Activated T-helper 2 cell treated with anti-CD3 and anti-CD28 coated beads, Interferon-gamma antibody, Interleukin-2, Interleukin-4, amounts not matched to agents 10 μg/mL and 5 μg/mL and 100 μg/mL, durations not matched to agents 14 hours and 24 hours and 36 hours (primary cell): ENCODE measurements at regions of chrX and their contacts with region 1.

Region 1: DNA sequence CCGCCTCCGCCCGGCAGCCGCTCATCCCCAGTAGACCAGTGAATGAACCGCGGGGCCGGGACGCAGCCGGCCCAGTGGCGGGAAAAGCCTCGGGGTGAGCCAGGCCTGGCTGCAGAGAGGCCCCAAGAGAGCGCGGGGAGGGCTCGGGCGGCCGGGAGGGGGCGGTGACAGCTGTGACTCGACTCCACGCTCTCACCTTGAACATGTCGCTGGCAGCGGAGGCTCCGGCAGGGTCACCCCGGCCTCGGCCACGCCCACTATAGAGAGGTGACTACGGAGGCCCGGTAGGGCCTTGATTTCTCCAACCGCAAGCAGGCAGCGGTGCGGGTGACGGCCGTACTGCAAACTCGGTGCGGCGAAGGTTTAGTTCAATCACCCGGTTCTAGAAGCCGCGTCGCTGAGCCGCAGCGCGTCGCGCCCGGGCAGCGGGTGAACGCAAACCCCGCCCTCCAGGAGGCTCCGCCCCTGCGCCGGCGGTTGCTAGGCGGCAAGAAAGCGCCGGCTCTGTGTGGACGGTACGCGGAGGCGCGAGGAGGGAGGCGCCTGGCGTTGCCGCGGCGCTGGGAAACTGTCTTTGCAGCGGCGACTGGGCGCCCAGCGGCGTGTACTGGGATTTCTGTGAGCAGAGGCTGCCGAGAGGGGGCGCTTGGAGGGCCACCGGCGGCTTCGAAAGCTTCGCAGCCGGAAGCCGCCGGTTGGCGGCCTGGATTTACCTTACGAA is at the starts of genes APOO and CXorf58:
- DNase-seq: peak; percentile 90
- H3K4me3 Mint-ChIP-seq: peak within 1 kb of the TSS; percentile 77
- H3K27ac Mint-ChIP-seq: peak within 1 kb of the TSS; percentile 85
- H3K4me1 Mint-ChIP-seq: peaks cover 22% of the 10 kb centered on the region
- H3K27me3 Mint-ChIP-seq: no peaks in the 10 kb centered on the region
- total RNA-seq, gene APOO: 21.9 and 22.4 TPM in 2 replicates
- total RNA-seq, gene CXorf58: 0.21 TPM in 1 of 2 replicates, not detected in the other

Region 2: DNA sequence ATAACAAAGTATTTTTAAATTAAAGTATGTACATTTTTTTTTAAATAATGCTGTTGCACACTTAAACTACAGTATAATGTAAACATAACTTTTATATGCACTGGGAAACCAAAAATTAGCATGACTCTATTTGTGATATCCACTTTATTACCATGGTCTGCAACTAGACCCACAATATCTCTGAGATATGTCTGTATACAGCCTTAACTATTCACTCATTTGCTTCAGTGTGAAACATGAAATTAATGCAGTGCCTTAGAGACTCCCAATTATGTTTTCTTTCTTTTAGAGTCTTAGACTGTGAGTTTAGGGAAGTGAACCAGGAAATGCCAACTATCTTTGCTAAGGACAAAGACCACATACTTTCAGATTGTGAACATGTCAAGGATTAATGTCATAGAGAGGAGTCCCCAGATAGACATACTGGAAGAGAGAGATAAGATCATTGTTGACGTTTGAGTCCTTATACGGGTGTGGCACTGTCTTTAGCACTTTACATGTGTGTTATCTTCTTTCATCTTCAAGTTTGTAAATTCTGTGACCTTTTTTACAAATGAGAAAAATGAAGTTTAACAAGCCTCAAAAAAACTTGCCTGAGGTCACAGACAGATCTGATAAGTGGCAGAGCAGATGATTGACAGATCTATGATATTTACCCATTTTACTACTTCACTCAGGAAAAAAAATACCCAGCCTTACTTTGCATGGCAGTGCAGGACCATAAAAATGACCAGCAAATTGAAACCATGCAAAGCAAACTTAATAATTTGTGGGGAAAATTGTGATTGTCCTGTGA is 23.4 kb after region 1 on chrX:
- intact Hi-C with region 1: loop called (anchors 1 kb)
- DNase-seq: no peak
- H3K4me3 Mint-ChIP-seq: peak overlapping the region; percentile 30
- H3K27ac Mint-ChIP-seq: peak overlapping the region; percentile 79
- H3K4me1 Mint-ChIP-seq: peaks cover 16% of the 10 kb centered on the region
- H3K27me3 Mint-ChIP-seq: no peaks in the 10 kb centered on the region

Region 3: GRCh38 chrX:23952984-23953907 is 45.6 kb after region 1 on chrX:
- intact Hi-C with region 1: loop called (anchors 2 kb)
- DNase-seq: peak; percentile 34
- H3K4me3 Mint-ChIP-seq: peak overlapping the region; percentile 83
- H3K27ac Mint-ChIP-seq: peak overlapping the region; percentile 95
- H3K4me1 Mint-ChIP-seq: peaks cover 27% of the 10 kb centered on the region
- H3K27me3 Mint-ChIP-seq: no peaks in the 10 kb centered on the region

Region 4: DNA sequence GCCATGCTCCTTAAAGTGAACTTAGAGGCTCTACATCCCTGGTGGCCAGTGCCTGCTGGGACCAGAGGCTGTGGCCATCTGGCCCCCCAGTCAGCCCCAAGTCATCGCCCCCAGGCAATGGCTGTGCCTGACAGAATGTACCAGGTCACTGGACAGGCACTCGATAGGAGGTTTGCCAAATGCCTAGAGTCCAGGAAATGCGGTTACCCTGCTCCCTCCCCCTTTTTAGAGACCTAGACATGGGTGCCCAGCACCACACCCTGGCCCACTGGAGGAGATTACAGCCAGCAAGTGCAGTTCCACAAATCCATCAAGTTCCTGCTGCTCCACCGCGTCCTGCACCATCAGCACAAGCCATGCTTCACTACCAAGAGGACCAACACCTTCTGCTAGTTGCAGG is 225.6 kb after region 1 on chrX:
- intact Hi-C with region 1: no loop called
- DNase-seq: no peak
- H3K4me3 Mint-ChIP-seq: no peak overlapping the region
- H3K27ac Mint-ChIP-seq: no peak overlapping the region
- H3K4me1 Mint-ChIP-seq: no peaks in the 10 kb centered on the region
- H3K27me3 Mint-ChIP-seq: no peaks in the 10 kb centered on the region

Region 5: DNA sequence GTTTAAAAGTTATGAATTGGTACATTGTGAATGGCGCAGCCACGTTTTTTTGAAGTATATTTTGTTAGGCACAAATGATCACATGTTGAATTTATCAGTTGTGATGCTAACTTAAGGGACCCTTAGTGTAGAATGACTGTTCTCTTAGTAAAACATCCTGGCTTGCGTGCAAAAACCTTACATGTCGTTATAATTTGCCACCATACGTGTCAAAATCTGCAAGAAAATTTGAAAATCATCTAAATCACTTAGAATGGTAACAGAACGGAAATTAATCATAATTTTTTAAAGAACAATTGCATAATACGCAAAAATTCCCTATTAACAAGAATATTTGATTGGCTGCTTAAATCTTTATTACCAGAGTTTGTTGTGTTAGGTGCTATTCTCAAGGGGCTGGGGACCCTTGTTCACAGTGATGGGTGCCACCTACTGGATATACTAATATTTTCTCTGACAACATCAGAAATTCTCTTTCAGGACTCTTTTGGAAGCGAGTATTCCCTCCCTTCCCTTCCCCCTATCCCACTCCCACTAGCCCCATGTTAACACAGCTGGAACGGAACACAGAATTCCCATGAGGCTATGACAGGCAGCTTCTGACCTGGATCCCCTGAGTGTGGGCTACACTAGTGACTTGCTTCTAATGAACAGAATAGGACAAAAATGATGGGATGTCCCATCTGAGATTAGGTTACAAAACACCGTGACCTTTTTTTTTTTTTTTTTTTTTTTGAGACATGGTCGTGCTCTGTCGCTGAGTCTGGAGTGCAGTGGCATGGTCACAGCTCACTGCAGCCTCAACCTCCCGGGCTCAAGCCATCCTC is 334.4 kb after region 1 on chrX:
- intact Hi-C with region 1: loop called (anchors 10 kb)
- DNase-seq: no peak
- H3K4me3 Mint-ChIP-seq: no peak overlapping the region
- H3K27ac Mint-ChIP-seq: no peak overlapping the region
- H3K4me1 Mint-ChIP-seq: peaks cover 5% of the 10 kb centered on the region
- H3K27me3 Mint-ChIP-seq: peaks cover 2% of the 10 kb centered on the region